PC-9 (cell line): ENCODE measurements at regions of chr2 and their contacts with region 1.

Region 1: DNA sequence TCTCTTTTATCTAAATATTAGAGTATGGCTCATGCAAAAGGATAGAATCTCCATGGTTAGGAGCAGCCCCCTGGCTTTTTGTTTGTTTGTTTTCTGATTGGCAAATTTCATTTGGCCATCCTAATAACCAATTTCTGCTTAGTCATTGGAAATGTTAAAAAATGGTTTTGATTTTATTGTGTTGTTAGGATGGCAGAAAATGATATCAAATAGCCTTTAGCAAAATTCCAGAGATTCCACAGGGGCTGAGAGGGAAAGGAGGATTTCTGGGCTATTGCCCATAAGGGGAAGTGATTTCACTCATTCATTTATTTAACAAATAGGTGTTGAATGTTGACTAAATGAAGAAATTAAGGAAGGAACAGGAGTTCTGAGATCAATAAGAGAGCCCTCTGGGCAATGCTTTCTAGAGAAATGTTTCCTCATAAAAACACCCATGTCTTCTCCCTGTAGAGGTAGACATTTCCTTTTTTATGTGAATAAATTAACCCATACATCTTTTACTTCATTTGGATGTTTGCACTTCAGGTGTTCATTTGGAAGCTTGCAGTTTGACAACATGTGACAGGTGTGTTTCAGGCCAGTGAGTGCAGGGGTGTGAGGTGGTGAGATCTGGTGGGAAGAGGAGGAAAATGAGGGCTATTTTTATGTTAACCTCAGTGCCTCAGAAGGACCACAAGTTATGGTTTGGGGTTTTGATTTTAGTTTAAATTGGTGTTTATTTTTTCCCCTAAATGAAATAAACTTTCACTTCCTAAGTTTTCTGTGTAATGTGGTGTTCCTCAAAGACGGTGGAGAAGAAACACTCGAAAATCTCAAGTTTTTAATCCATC is 61.7 kb upstream of the EPC2 start:
- DNase-seq: peak; percentile 32 to 91
- H3K4me3 ChIP-seq: no peak overlapping the region
- H3K27ac ChIP-seq: peak overlapping the region; percentile 93
- H3K4me1 ChIP-seq: peaks cover 23% of the 10 kb centered on the region
- H3K27me3 ChIP-seq: no peaks in the 10 kb centered on the region
- CTCF ChIP-seq: no peak

Region 2: DNA sequence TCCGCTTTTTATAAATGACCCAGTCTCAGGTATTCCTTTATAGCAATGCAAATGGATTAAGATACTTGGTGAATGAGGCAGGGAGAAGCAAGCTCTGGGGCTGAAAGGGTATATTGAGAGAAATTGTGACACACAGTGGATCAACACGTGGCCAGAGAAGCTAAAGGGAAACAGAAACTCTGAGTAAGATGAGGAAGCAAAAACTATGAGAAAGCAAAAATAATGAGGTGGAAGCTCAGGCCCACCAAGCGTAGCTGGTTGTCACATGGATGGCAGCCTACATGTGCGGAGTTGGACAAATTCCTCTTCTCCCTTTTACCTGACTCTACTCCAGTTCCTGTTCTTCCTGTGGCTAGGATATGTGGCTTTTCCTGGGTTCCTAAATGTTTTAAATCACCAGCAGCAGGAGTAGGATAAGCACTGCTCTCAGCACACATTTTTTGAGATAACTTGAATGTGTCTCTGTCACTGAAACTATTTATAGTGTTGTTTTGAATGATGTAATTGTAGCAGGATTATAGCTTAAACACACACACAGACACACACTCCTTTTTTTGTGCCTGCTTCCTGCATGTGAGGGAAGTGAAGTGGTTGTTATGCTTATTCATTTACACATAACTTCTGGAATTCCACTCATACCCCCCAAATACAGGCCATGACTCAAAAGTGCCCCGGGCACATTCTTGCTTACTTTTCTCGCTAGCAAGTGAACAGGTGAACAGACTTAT is 31.6 kb after region 1 on chr2:
- CTCF ChIA-PET with region 1: no interaction called
- POLR2A ChIA-PET with region 1: no interaction called
- intact Hi-C with region 1: loop called (anchors 1 kb)
- DNase-seq: peak; percentile 85 to 96
- H3K4me3 ChIP-seq: peak overlapping the region; percentile 23; the same call in 1 of the 2 replicates
- H3K27ac ChIP-seq: peak overlapping the region; percentile 99
- H3K4me1 ChIP-seq: peaks cover 41% of the 10 kb centered on the region
- H3K27me3 ChIP-seq: no peaks in the 10 kb centered on the region
- CTCF ChIP-seq: no peak

Region 3: GRCh38 chr2:149080946-149081345 is 498.1 kb after region 1 on chr2:
- CTCF ChIA-PET with region 1: interaction called, 10 read pairs
- POLR2A ChIA-PET with region 1: no interaction called
- intact Hi-C with region 1: no loop called
- DNase-seq: peak in 1 of 2 experiments; percentile 83
- H3K4me3 ChIP-seq: no peak overlapping the region
- H3K27ac ChIP-seq: peak overlapping the region; percentile 39; the same call in 1 of the 2 replicates
- H3K4me1 ChIP-seq: peaks cover 61% of the 10 kb centered on the region
- H3K27me3 ChIP-seq: no peaks in the 10 kb centered on the region
- CTCF ChIP-seq: no peak